Natural killer cell (primary cell): ENCODE measurements at regions of chr18 and their contacts with region 1.

Region 1: GRCh38 chr18:76803814-76804213 is 18.5 kb upstream of the ZNF236 start:
- DNase-seq: peak; percentile 46 to 85
- ATAC-seq: peak; percentile 64 to 70 (median 69)
- H3K4me3 ChIP-seq: no peak overlapping the region
- H3K4me3 Mint-ChIP-seq: no peak overlapping the region
- H3K27ac ChIP-seq: no peak overlapping the region
- H3K27ac Mint-ChIP-seq: peak overlapping the region in 1 of 2 donors; percentile 53
- H3K4me1 ChIP-seq: peaks cover 17% of the 10 kb centered on the region
- H3K4me1 Mint-ChIP-seq: peaks cover 6 to 17% of the 10 kb centered on the region in 2 donors
- H3K27me3 ChIP-seq: peaks cover 5% of the 10 kb centered on the region
- H3K27me3 Mint-ChIP-seq: peaks cover 0 to 4% of the 10 kb centered on the region in 2 donors
- CTCF ChIP-seq: peak; percentile 81

Region 2: GRCh38 chr18:76670564-76671288 is 133.1 kb before region 1 on chr18:
- intact Hi-C with region 1: no loop called
- DNase-seq: no peak
- ATAC-seq: no peak
- H3K4me3 ChIP-seq: no peak overlapping the region
- H3K4me3 Mint-ChIP-seq: no peak overlapping the region
- H3K27ac ChIP-seq: no peak overlapping the region
- H3K27ac Mint-ChIP-seq: no peak overlapping the region
- H3K4me1 ChIP-seq: no peaks in the 10 kb centered on the region
- H3K4me1 Mint-ChIP-seq: no peaks in the 10 kb centered on the region
- H3K27me3 ChIP-seq: no peaks in the 10 kb centered on the region
- H3K27me3 Mint-ChIP-seq: peaks cover 3 to 11% of the 10 kb centered on the region in 2 donors
- CTCF ChIP-seq: no peak

Region 3: DNA sequence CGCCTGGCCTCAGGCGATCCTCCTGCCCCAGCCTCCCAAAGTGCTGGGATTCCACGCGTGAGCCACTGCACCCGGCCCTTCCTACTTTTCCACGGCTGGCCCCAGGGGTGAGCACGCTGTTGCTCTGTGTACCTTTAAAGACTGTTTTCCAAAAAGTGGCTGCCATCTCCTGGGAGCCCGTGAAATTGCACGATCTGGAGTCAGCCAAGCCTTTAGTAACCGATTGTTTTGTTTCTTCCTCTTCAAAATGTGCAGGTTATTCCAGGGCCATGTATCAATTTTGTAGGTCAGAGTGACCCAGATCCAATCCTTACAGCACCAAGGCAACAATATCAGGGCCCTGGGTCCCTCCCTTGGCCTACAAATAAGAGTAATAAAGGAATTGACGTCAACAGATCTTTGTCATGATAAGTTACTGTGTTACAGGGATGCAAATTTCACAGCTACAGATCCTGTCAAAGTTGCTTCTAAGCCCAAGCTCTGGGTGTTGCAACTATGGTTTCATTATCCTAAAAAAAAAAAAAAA is 117.0 kb before region 1 on chr18:
- intact Hi-C with region 1: no loop called
- DNase-seq: peak in 1 of 2 donors; percentile 38
- ATAC-seq: peak; percentile 40 to 75 (median 71)
- H3K4me3 ChIP-seq: no peak overlapping the region
- H3K4me3 Mint-ChIP-seq: peak overlapping the region; percentile 52
- H3K27ac ChIP-seq: peak overlapping the region; percentile 15
- H3K27ac Mint-ChIP-seq: peak overlapping the region; percentile 43 to 87
- H3K4me1 ChIP-seq: peaks cover 2% of the 10 kb centered on the region
- H3K4me1 Mint-ChIP-seq: peaks cover 6 to 9% of the 10 kb centered on the region in 2 donors
- H3K27me3 ChIP-seq: peaks cover 6% of the 10 kb centered on the region
- H3K27me3 Mint-ChIP-seq: peaks cover 24 to 40% of the 10 kb centered on the region in 2 donors
- CTCF ChIP-seq: no peak

Region 4: DNA sequence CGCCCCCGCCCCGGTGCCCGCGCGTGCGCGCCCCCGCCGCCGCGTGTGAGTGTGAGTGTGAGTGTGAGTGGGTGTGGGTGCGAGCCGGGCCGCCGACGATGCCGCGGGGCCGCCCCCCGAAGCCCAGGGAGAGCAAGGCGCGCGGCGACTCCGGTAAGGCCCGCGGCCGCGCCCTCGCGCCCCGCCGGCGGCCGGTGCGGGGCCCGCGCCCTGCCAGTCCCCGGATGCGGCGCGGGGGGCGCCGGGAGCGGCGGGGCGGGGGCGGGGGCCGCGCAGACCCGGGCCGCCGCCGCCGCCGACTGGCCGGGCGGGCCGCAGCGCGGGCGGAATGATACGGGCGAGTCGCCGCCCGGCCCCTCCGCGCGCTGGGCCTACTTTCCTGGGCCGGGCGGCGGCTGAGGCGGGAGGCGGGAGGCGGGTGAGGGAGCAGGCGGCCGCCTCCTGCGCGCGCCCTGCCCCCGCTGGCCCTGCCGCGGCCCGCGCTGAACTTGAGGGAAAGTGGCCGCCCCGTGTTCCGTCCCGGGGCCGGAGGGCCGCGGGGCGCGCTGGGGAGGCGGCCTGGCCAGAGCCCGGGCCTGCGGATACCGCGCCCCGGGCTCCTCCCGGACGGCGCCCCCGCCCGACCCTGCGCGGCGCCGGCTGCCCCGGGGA is 18.8 kb after region 1 on chr18 and contains the start of gene ZNF236:
- intact Hi-C with region 1: loop called (anchors 1 kb)
- DNase-seq: peak; percentile 77 to 83
- ATAC-seq: peak; percentile 62 to 76 (median 69)
- H3K4me3 ChIP-seq: peak within 1 kb of the TSS; percentile 86
- H3K4me3 Mint-ChIP-seq: peak within 1 kb of the TSS; percentile 85
- H3K27ac ChIP-seq: peak within 1 kb of the TSS; percentile 86
- H3K27ac Mint-ChIP-seq: peak within 1 kb of the TSS; percentile 87 to 89
- H3K4me1 ChIP-seq: peaks cover 30% of the 10 kb centered on the region
- H3K4me1 Mint-ChIP-seq: peaks cover 37 to 57% of the 10 kb centered on the region in 2 donors
- H3K27me3 ChIP-seq: no peaks in the 10 kb centered on the region
- H3K27me3 Mint-ChIP-seq: no peaks in the 10 kb centered on the region
- CTCF ChIP-seq: no peak
- total RNA-seq, gene ZNF236: 35.1 to 42.2 (median 39.7) TPM

Region 5: DNA sequence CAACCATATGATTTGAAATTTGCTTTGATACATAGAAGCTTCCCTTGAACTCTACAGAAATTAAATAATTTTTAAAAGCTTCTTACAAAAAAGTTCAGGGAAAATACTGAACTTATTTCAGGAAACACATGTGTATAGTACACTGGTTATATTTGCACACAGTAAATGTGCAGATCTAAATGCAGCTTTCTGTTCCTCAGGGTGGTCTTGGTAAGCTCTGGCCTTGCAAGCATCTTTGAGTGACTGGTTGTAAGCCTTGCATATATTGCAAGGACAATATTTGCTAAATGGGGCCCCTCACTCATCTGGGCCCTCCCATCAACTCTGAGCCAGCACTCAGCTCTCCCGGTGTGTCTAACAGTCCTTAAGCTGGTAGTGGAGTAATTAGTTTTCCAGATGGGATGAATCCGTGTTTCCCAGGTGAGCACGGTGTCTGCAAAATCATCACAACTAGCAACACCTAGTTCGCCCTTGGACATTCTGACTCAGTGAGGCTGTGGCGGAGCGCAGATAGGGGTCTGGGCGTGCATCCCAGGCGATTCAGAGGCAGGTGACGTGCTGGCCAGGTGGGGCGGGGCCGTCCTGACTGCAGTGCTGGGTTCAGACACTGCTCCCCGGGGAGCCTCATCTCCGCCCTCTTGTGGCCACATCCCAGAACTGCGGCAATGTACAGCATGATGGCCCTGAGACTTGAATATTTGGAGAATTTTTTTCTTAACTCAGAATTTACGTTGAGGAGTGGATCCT is 179.2 kb after region 1 on chr18:
- intact Hi-C with region 1: loop called (anchors 1 kb)
- DNase-seq: peak; percentile 77 to 88
- ATAC-seq: peak; percentile 88 to 100 (median 98)
- H3K4me3 ChIP-seq: no peak overlapping the region
- H3K4me3 Mint-ChIP-seq: no peak overlapping the region
- H3K27ac ChIP-seq: no peak overlapping the region
- H3K27ac Mint-ChIP-seq: no peak overlapping the region
- H3K4me1 ChIP-seq: peaks cover 5% of the 10 kb centered on the region
- H3K4me1 Mint-ChIP-seq: peaks cover 5 to 8% of the 10 kb centered on the region in 2 donors
- H3K27me3 ChIP-seq: no peaks in the 10 kb centered on the region
- H3K27me3 Mint-ChIP-seq: no peaks in the 10 kb centered on the region
- CTCF ChIP-seq: peak; percentile 94

Region 6: GRCh38 chr18:77702686-77703085 is 898.9 kb after region 1 on chr18:
- intact Hi-C with region 1: loop called (anchors 2 kb)
- DNase-seq: peak in 1 of 2 donors; percentile 44
- ATAC-seq: no peak
- H3K4me3 ChIP-seq: no peak overlapping the region
- H3K4me3 Mint-ChIP-seq: no peak overlapping the region
- H3K27ac ChIP-seq: no peak overlapping the region
- H3K27ac Mint-ChIP-seq: no peak overlapping the region
- H3K4me1 ChIP-seq: no peaks in the 10 kb centered on the region
- H3K4me1 Mint-ChIP-seq: no peaks in the 10 kb centered on the region
- H3K27me3 ChIP-seq: peaks cover 2% of the 10 kb centered on the region
- H3K27me3 Mint-ChIP-seq: peaks cover 29 to 74% of the 10 kb centered on the region in 2 donors
- CTCF ChIP-seq: no peak